Endothelial cell of umbilical vein (primary cell): ENCODE measurements at regions of chr1 and their contacts with region 1.

Region 1: DNA sequence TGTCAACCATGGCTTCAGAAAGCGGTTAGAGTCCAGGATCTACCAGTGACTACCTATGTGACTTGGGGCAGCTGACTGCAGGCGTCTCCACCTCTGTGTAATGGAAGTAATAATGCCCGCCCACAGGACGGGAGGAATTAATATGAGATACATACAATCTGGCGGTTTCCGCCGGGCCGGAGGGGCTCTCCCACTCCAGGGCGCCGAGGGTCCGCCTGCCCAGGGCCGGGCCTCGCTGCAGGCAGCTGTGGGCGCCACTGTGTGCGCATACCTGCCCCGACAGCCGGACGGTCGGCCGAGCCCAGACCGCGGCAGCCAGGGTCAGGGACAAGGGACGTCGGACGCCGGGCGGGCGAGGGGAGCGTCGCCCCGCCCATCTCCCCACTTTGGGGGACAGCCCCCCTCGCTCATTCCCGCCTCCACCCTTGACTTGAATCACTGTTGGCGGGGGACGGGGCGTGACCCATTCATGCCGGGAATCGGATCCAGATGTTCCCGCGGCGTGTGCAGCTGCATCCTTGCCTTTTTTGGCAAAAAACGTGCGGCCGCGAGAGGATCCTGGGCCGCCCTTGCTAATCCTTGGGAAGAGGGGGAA is 6.0 kb upstream of the SF3A3 start:
- DNase-seq: no peak
- H3K4me3 ChIP-seq: peak overlapping the region in 1 of 3 experiments; percentile 20
- H3K27ac ChIP-seq: peak overlapping the region; percentile 46
- H3K4me1 ChIP-seq: peaks cover 44% of the 10 kb centered on the region
- H3K27me3 ChIP-seq: no peaks in the 10 kb centered on the region
- CTCF ChIP-seq: no peak
- POLR2A ChIP-seq: no peak

Region 2: GRCh38 chr1:37595440-37596319 is 400.2 kb before region 1 on chr1 and contains the start of gene GNL2:
- CTCF ChIA-PET with region 1: no interaction called
- POLR2A ChIA-PET with region 1: no interaction called
- dilution Hi-C with region 1: no loop called
- intact Hi-C with region 1: loop called (anchors 10 kb)
- DNase-seq: peak; percentile 97
- H3K4me3 ChIP-seq: peak within 1 kb of the TSS; percentile 54 to 89 (median 75)
- H3K27ac ChIP-seq: peak within 1 kb of the TSS; percentile 76
- H3K4me1 ChIP-seq: peaks cover 17% of the 10 kb centered on the region
- H3K27me3 ChIP-seq: peaks cover 0 to 6% of the 10 kb centered on the region in 2 experiments
- CTCF ChIP-seq: no peak
- POLR2A ChIP-seq: peak; percentile 87
- total RNA-seq, gene GNL2: 55.5 and 57.1 TPM in 2 replicates

Region 3: GRCh38 chr1:38012363-38013226 is 16.7 kb after region 1 on chr1 and contains the start of gene UTP11:
- CTCF ChIA-PET with region 1: interaction called, 14 read pairs
- POLR2A ChIA-PET with region 1: interaction called, 14 read pairs
- dilution Hi-C with region 1: no loop called
- intact Hi-C with region 1: loop called (anchors 1 kb)
- DNase-seq: peak; percentile 99
- H3K4me3 ChIP-seq: peak within 1 kb of the TSS; percentile 27 to 81 (median 58)
- H3K27ac ChIP-seq: peak within 1 kb of the TSS; percentile 85
- H3K4me1 ChIP-seq: peaks cover 49% of the 10 kb centered on the region
- H3K27me3 ChIP-seq: no peaks in the 10 kb centered on the region
- CTCF ChIP-seq: no peak
- POLR2A ChIP-seq: peak; percentile 90
- total RNA-seq, gene UTP11: 54.1 and 60.1 TPM in 2 replicates

Region 4: GRCh38 chr1:38018864-38019343 is 23.1 kb after region 1 on chr1:
- CTCF ChIA-PET with region 1: interaction called, 37 read pairs
- POLR2A ChIA-PET with region 1: interaction called, 10 read pairs
- dilution Hi-C with region 1: no loop called
- intact Hi-C with region 1: loop called (anchors 1 kb)
- DNase-seq: peak; percentile 28
- H3K4me3 ChIP-seq: no peak overlapping the region
- H3K27ac ChIP-seq: no peak overlapping the region
- H3K4me1 ChIP-seq: peaks cover 32% of the 10 kb centered on the region
- H3K27me3 ChIP-seq: no peaks in the 10 kb centered on the region
- CTCF ChIP-seq: peak; percentile 49 to 55
- POLR2A ChIP-seq: no peak

Region 5: DNA sequence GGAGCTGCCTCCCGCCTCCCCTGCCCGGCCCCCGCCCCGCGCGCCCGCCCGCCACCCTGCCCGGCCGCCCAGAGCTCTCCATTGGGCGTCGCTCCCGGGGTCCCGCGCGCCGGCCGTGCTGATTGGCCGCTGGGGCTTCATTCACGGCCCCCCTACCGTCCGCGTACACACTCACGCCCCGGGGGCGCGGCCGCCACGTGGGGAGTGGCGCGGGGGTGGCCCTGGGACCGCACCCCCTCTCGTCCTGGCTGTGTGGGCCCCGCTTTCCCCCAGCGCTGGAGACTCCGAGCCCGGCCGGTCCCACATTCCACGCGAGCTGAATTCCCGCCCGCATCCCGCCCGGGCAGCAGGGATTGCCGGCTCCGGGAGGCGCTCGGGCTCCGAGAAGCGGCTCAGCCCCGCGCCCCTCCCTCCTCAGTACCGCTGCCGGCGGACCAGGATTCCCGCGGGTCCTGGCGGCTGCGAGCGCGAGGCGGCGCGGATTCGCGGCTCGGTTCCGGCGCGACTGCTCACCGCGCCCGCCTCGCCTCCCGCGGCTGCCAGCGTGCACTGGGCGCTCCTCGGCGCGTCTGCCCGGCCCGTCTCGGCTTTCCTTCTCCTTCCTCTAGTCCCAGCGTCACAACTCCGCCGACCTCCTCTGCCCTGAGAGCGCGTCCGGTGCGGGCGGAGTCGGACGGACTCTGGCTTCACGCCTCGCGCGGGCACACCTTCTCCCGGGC is 51.2 kb after region 1 on chr1:
- CTCF ChIA-PET with region 1: interaction called, 3 read pairs
- POLR2A ChIA-PET with region 1: no interaction called
- dilution Hi-C with region 1: no loop called
- intact Hi-C with region 1: loop called (anchors 1 kb)
- DNase-seq: peak; percentile 71
- H3K4me3 ChIP-seq: peak overlapping the region; percentile 26 to 37 (median 28)
- H3K27ac ChIP-seq: no peak overlapping the region
- H3K4me1 ChIP-seq: peaks cover 7% of the 10 kb centered on the region
- H3K27me3 ChIP-seq: peaks cover 43 to 58% of the 10 kb centered on the region in 2 experiments
- CTCF ChIP-seq: no peak
- POLR2A ChIP-seq: no peak

Region 6: GRCh38 chr1:38097284-38097898 is 101.5 kb after region 1 on chr1:
- CTCF ChIA-PET with region 1: no interaction called
- POLR2A ChIA-PET with region 1: no interaction called
- dilution Hi-C with region 1: no loop called
- intact Hi-C with region 1: no loop called
- DNase-seq: no peak
- H3K4me3 ChIP-seq: no peak overlapping the region
- H3K27ac ChIP-seq: no peak overlapping the region
- H3K4me1 ChIP-seq: no peaks in the 10 kb centered on the region
- H3K27me3 ChIP-seq: no peaks in the 10 kb centered on the region
- CTCF ChIP-seq: no peak
- POLR2A ChIP-seq: no peak